ENCODE measurements at regions of chr3 and their contacts with region 1.

Region 1: GRCh38 chr3:172213200-172213599 is 173.8 kb downstream of the FNDC3B start:
- DNase-seq: peak; percentile 49
- ATAC-seq: peak; percentile 82
- H3K4me3 ChIP-seq: 0 out of 2 replicates have a peak overlapping the region, but pooled peaks have one; percentile 20
- H3K27ac ChIP-seq: peak overlapping the region; percentile 80
- H3K4me1 ChIP-seq: peaks cover 24% of the 10 kb centered on the region
- H3K27me3 ChIP-seq: no peaks in the 10 kb centered on the region
- CTCF ChIP-seq: no peak
- EP300 ChIP-seq: peak; percentile 48 to 81; a peak in 3 of 4 replicates
- POLR2A ChIP-seq: no peak
- RAD21 ChIP-seq: 0 out of 2 replicates have a peak, but pooled peaks have one; percentile 1

Region 2: DNA sequence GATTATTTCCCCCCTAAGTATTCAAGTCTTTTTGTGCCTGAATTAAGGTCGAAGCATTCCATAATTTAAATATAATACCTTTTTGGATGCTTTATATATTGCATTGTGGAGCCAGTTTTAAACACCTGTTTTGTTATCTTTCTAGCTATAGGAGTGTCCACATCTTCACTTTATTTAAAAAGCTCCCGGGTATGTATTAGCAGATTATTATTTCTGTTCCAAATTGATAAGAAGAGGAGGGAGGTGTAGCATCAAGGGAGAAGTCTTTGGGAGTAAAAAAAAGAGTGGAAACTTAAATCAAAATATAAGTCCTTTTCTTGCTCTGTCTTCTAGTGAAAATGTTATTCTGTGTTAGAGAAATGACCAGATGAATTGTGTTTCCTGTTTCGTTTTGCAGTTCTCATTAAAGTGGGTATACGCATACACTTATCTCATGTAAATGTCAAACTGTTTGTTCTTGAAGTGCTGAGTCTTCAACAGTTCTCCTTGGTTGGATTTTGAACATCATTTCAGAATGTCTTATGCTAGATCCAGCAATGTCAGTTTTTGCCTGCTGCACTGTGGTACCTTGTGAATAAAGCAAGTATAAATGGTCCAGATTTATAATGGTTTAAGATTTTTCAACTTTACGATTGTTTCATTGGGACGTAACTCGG is 68.0 kb before region 1 on chr3:
- CTCF ChIA-PET with region 1: interaction called, 3 read pairs
- POLR2A ChIA-PET with region 1: interaction called, 5 read pairs
- RAD21 ChIA-PET with region 1: interaction called, 5 read pairs
- SMC1A ChIA-PET with region 1: interaction called, 7 read pairs
- in situ Hi-C with region 1: no loop called
- intact Hi-C with region 1: loop called (anchors 2 kb)
- DNase-seq: peak; percentile 60
- ATAC-seq: peak; percentile 57
- H3K4me3 ChIP-seq: no peak overlapping the region
- H3K27ac ChIP-seq: peak overlapping the region; percentile 48
- H3K4me1 ChIP-seq: peaks cover 66% of the 10 kb centered on the region
- H3K27me3 ChIP-seq: no peaks in the 10 kb centered on the region
- CTCF ChIP-seq: no peak
- EP300 ChIP-seq: peak in 1 of 2 experiments; percentile 8; a peak in 1 of 4 replicates
- POLR2A ChIP-seq: no peak
- RAD21 ChIP-seq: no peak; the same call in 1 of the 2 replicates

Region 3: GRCh38 chr3:172276105-172276504 is 62.9 kb after region 1 on chr3:
- CTCF ChIA-PET with region 1: no interaction called
- POLR2A ChIA-PET with region 1: interaction called, 4 read pairs
- RAD21 ChIA-PET with region 1: no interaction called
- SMC1A ChIA-PET with region 1: interaction called, 10 read pairs
- in situ Hi-C with region 1: no loop called
- intact Hi-C with region 1: no loop called
- DNase-seq: no peak
- ATAC-seq: peak; percentile 36; the same call in 1 of the 3 replicates
- H3K4me3 ChIP-seq: no peak overlapping the region
- H3K27ac ChIP-seq: no peak overlapping the region
- H3K4me1 ChIP-seq: peaks cover 12% of the 10 kb centered on the region
- H3K27me3 ChIP-seq: no peaks in the 10 kb centered on the region
- CTCF ChIP-seq: peak in 2 of 3 experiments; percentile 15 to 33; a peak in 4 of 6 replicates
- EP300 ChIP-seq: no peak
- POLR2A ChIP-seq: no peak
- RAD21 ChIP-seq: peak; percentile 61

Region 4: GRCh38 chr3:172384836-172385235 is 171.6 kb after region 1 on chr3:
- CTCF ChIA-PET with region 1: no interaction called
- POLR2A ChIA-PET with region 1: no interaction called
- RAD21 ChIA-PET with region 1: no interaction called
- SMC1A ChIA-PET with region 1: no interaction called
- in situ Hi-C with region 1: no loop called
- intact Hi-C with region 1: no loop called
- DNase-seq: no peak
- ATAC-seq: no peak
- H3K4me3 ChIP-seq: no peak overlapping the region
- H3K27ac ChIP-seq: no peak overlapping the region
- H3K4me1 ChIP-seq: no peaks in the 10 kb centered on the region
- H3K27me3 ChIP-seq: no peaks in the 10 kb centered on the region
- CTCF ChIP-seq: no peak
- EP300 ChIP-seq: no peak
- POLR2A ChIP-seq: no peak
- RAD21 ChIP-seq: no peak

Measured in GM12878 (cell line).